ENCODE measurements at regions of chrX and their contacts with region 1.

Region 1: DNA sequence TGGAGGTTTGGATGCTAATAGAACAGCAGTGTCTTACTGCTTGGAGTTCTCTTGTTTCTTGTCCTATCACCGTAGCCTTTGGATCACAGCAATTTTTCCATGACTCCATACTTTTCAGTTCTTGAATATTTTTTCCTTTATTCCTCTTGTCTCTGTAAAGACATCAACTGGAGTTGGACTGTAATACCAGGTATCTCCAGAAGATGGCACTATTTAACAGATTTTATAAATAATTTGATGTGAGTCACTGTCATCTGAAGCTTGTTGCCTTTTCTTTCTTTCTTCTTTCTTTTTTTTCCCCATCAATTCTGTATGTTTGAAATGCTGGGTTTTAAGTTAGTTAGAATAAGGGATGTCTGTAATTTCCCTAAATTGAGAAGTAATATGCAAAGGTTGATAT is 24.1 kb downstream of the HPRT1 start:
- DNase-seq: no peak
- H3K4me3 ChIP-seq: no peak overlapping the region
- H3K27ac ChIP-seq: no peak overlapping the region
- H3K4me1 ChIP-seq: no peaks in the 10 kb centered on the region
- H3K27me3 ChIP-seq: no peaks in the 10 kb centered on the region
- CTCF ChIP-seq: peak; percentile 34 to 57 (median 56)

Region 2: DNA sequence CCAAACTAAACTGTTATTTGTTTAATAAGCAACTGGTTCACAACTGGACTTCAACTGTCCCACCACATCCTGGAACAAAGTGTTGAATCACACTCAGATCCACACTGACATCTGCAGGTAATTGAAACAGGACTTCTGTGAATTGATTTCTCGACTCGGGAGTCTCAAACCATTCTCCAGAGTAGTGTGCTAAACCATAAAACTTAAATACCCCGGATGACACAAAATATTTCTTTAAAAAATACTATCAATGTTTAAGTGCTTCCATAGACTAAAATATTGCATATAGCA is 269.6 kb after region 1 on chrX:
- intact Hi-C with region 1: loop called (anchors 10 kb)
- DNase-seq: no peak
- H3K4me3 ChIP-seq: no peak overlapping the region
- H3K27ac ChIP-seq: no peak overlapping the region
- H3K4me1 ChIP-seq: no peaks in the 10 kb centered on the region
- H3K27me3 ChIP-seq: no peaks in the 10 kb centered on the region
- CTCF ChIP-seq: no peak

Region 3: GRCh38 chrX:134782796-134783195 is 298.8 kb after region 1 on chrX:
- intact Hi-C with region 1: loop called (anchors 5 kb)
- DNase-seq: no peak
- H3K4me3 ChIP-seq: no peak overlapping the region
- H3K27ac ChIP-seq: no peak overlapping the region
- H3K4me1 ChIP-seq: no peaks in the 10 kb centered on the region
- H3K27me3 ChIP-seq: no peaks in the 10 kb centered on the region
- CTCF ChIP-seq: peak; percentile 8 to 55 (median 47)

Measured in ascending aorta (tissue), 2 donors.